GM10248 (cell line): ENCODE measurements at regions of chr15 and their contacts with region 1.

Region 1: DNA sequence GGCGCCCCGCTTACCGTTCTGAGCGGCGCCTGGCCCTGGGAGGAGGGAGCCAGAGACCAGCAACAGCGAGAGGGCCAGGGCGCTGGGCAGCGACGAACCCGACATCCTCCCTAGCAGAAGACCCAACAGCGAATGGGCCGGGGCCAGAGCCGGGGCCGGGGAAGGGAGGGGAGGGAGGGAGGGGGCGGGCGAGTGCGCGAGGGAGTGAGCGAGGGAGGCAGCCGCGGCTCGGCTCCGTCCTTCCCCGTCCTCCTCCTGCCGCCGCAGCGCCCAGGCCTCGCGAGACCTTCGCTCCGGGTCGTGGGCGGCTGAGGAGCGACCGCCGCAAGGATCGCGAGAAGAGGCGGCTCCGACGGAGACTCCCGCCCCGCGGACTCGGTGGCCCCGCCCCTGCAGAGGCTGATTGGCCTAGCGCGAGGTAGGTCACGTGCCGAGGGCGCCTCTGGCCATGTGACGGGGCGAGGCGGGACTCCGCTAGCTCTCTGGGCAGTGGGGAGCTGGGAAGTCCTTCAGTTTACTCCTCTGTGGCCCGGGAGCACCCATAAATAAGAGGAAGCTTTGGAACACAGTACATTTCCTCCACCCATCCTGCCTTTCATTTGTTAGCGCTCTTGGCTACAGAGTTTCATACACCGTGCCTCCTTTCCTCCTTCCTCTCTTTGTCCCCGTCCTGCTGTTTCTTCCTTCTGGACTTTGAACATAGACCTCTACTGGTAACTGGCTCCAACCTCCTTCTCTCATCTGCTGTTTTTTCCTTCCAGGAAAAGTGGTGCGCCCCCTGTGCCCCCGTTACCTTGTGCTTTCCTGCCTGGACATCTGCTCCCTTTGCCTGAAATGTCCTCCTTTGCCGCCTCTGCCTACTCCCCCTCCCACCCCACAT is at the start of gene NPTN:
- DNase-seq: peak; percentile 96
- CTCF ChIP-seq: no peak

Region 2: GRCh38 chr15:73240866-73241499 is 392.4 kb before region 1 on chr15:
- CTCF ChIA-PET with region 1: interaction called, 10 read pairs
- POLR2A ChIA-PET with region 1: no interaction called
- DNase-seq: peak; percentile 45
- CTCF ChIP-seq: peak; percentile 84

Region 3: GRCh38 chr15:73571346-73571745 is 62.0 kb before region 1 on chr15:
- CTCF ChIA-PET with region 1: interaction called, 118 read pairs
- POLR2A ChIA-PET with region 1: no interaction called
- DNase-seq: no peak
- CTCF ChIP-seq: no peak

Region 4: DNA sequence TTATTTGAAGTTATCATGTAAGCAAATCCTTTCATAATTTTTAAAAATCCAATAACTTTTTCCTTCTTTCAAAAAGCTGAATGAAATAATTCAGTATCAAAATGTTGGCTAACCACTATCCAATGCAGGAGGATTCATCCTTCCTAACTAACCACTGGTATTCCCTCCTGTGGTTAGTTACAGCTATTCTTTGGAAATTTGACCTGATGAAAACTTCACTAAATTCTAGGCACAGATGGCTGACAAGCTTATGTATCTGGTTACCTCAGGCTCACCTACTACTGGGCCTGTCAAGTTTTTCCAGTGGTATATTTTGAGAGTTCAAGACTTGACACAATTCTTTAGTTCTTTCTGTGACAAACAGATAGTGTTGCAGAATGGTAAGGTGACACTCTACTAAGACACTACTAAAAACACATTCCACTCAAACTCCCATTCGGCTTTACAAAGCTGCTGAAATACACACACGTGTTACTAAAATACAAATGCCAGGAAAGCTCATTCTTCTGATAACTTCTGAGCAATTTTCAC is 16.0 kb before region 1 on chr15:
- CTCF ChIA-PET with region 1: interaction called, 182 read pairs
- POLR2A ChIA-PET with region 1: interaction called, 3 read pairs
- DNase-seq: no peak
- CTCF ChIP-seq: no peak

Region 5: GRCh38 chr15:73677146-73677607 is 43.8 kb after region 1 on chr15:
- CTCF ChIA-PET with region 1: interaction called, 40 read pairs
- POLR2A ChIA-PET with region 1: no interaction called
- DNase-seq: peak; percentile 54
- CTCF ChIP-seq: peak; percentile 78

Region 6: GRCh38 chr15:73704869-73705645 is 71.7 kb after region 1 on chr15:
- CTCF ChIA-PET with region 1: interaction called, 105 read pairs
- POLR2A ChIA-PET with region 1: no interaction called
- DNase-seq: peak; percentile 80
- CTCF ChIP-seq: peak; percentile 81

Region 7: DNA sequence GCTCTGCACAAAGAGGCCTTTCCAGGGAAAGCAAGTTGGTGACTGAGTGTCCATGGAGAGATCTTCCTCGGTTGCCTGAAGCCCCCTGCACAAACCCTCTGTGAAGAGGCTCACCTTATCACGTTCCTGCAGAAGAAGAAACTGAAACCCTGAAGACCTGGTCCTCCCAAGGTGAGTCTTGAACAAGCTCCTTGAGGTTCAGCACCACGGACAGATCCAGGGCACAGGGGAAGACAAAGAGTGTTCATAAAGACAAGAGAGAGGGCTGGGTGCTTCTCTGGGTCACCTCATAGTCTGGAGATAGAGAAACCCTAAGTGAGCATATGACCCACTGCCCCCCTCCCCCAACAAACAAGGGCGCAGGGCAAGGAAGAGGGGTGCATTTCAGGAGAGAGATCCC is 218.3 kb after region 1 on chr15:
- CTCF ChIA-PET with region 1: no interaction called
- POLR2A ChIA-PET with region 1: no interaction called
- DNase-seq: peak; percentile 47
- CTCF ChIP-seq: no peak